PC-3 (cell line): ENCODE measurements at regions of chr2 and their contacts with region 1.

Region 1: GRCh38 chr2:196076778-196077568 is 8.3 kb upstream of the DNAH7 start:
- DNase-seq: no peak
- ATAC-seq: no peak
- H3K4me3 ChIP-seq: no peak overlapping the region
- H3K27ac ChIP-seq: no peak overlapping the region
- H3K4me1 ChIP-seq: peaks cover 22% of the 10 kb centered on the region
- H3K27me3 ChIP-seq: no peaks in the 10 kb centered on the region
- CTCF ChIP-seq: no peak

Region 2: DNA sequence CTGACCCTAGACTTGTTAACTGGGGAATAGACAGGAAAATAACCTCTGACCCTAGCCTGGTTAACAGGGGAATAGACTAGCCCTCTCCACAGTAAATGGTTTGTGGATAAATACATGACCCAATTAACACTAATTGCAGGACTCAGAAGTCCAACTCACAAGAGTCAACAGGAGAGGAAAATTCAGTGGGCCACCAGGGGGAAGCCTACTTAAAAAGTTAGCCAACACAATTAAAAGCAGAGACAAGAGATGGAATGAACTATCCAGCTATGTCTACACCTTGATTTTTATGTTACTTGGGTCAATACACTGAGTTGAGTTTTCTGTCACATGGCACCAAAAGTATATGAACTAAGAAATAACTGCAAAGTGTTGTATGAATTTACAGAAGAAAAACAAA is 578.8 kb before region 1 on chr2:
- CTCF ChIA-PET with region 1: no interaction called
- POLR2A ChIA-PET with region 1: no interaction called
- intact Hi-C with region 1: no loop called
- DNase-seq: peak; percentile 59
- ATAC-seq: peak; percentile 37; the same call in 1 of the 2 replicates
- H3K4me3 ChIP-seq: no peak overlapping the region
- H3K27ac ChIP-seq: no peak overlapping the region
- H3K4me1 ChIP-seq: 0 out of 2 replicates have a peak, but pooled peaks cover 7% of the 10 kb centered on the region
- H3K27me3 ChIP-seq: no peaks in the 10 kb centered on the region
- CTCF ChIP-seq: peak; percentile 72

Region 3: GRCh38 chr2:195912079-195912478 is 164.9 kb before region 1 on chr2:
- CTCF ChIA-PET with region 1: no interaction called
- POLR2A ChIA-PET with region 1: no interaction called
- intact Hi-C with region 1: no loop called
- DNase-seq: no peak
- ATAC-seq: no peak
- H3K4me3 ChIP-seq: no peak overlapping the region
- H3K27ac ChIP-seq: no peak overlapping the region
- H3K4me1 ChIP-seq: no peaks in the 10 kb centered on the region
- H3K27me3 ChIP-seq: no peaks in the 10 kb centered on the region
- CTCF ChIP-seq: no peak

Region 4: DNA sequence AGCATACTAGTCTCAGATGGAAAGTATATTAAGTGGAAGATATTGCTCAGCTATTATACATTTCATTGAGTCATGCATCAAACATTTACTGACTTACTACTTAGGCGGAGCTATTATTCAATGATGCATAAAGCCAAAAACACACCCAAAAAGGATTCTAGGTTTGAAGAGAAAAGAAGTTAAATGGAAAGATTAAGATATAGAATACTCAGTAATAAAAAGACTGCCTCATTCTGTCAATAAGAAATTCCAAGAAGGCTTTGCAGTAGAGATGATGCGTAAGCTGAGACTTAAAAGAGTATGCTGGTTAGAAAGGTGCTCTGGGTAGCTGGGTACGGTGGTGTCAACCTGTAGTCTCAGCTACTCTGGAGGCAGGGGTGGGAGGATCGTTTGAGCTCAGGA is 66.8 kb after region 1 on chr2:
- CTCF ChIA-PET with region 1: interaction called, 4 read pairs
- POLR2A ChIA-PET with region 1: no interaction called
- intact Hi-C with region 1: loop called (anchors 5 kb)
- DNase-seq: peak; percentile 87
- ATAC-seq: peak; percentile 97
- H3K4me3 ChIP-seq: no peak overlapping the region
- H3K27ac ChIP-seq: peak overlapping the region; percentile 52
- H3K4me1 ChIP-seq: peaks cover 17% of the 10 kb centered on the region
- H3K27me3 ChIP-seq: no peaks in the 10 kb centered on the region
- CTCF ChIP-seq: no peak

Region 5: GRCh38 chr2:196171248-196171871 is 94.4 kb after region 1 on chr2 and contains the start of gene STK17B:
- CTCF ChIA-PET with region 1: no interaction called
- POLR2A ChIA-PET with region 1: interaction called, 7 read pairs
- intact Hi-C with region 1: loop called (anchors 1 kb)
- DNase-seq: peak; percentile 96
- ATAC-seq: peak; percentile 73
- H3K4me3 ChIP-seq: peak within 1 kb of the TSS; percentile 96
- H3K27ac ChIP-seq: peak within 1 kb of the TSS; percentile 49
- H3K4me1 ChIP-seq: peaks cover 28% of the 10 kb centered on the region
- H3K27me3 ChIP-seq: no peaks in the 10 kb centered on the region
- CTCF ChIP-seq: no peak
- total RNA-seq, gene STK17B: 21.3 and 22.1 TPM in 2 replicates

Region 6: DNA sequence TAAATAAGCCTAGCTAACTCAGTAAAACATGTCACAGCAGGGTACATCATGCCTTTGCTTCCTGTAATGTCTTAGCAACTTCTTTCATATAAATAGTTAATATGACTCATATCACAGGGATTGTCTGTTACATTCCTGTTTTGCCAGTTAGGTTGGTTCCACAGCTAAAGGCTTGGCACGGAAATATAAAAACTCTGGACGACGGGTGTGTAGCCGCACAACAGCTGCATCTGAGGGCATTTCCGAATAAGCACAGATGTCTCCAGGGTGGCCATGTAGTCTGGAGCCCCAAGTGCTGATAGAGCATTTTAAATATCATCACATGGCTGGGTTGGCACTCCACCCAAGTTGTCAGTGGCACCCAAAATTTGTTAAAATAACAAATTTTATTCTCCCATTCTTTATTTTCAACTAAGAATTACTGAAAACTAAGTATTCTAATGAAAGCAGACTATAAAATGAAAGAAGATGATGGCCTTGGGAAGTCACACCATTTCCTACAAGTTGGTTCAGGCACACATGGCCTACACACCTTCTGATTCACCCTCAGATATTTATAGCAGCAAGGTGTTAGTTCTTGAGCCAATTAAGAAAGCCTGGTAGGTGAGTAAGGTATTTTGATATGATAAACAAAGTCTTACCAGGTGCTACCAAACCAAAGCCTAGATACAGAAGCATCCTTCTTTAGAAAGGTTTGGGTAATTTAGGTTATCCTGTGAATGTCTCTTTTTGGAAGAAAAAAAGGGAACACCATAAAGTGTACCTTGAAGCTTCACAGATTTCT is 156.2 kb after region 1 on chr2:
- CTCF ChIA-PET with region 1: no interaction called
- POLR2A ChIA-PET with region 1: no interaction called
- intact Hi-C with region 1: loop called (anchors 2 kb)
- DNase-seq: peak; percentile 97
- ATAC-seq: peak; percentile 96
- H3K4me3 ChIP-seq: peak overlapping the region; percentile 13; the same call in 1 of the 2 replicates
- H3K27ac ChIP-seq: peak overlapping the region; percentile 77
- H3K4me1 ChIP-seq: peaks cover 26% of the 10 kb centered on the region
- H3K27me3 ChIP-seq: no peaks in the 10 kb centered on the region
- CTCF ChIP-seq: no peak

Region 7: DNA sequence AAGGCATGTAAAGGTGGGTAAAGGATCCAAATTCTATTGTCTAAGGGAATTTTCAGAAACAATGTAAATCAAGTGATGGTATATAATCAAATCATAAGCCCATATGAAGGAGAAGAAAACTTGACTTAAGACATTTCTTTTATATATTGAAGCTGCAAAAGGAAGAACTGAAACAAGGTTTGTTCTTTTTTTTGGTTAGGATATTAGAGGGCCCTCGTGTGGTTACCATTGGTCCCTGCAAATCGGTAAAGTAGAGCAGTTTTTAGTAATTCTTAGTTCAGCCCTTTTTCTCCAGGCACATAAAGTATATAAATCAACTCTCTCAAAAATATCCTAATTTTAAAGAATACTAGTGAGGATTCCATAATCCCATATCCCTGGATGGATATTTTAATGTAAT is 200.0 kb after region 1 on chr2:
- CTCF ChIA-PET with region 1: interaction called, 7 read pairs
- POLR2A ChIA-PET with region 1: no interaction called
- intact Hi-C with region 1: loop called (anchors 1 kb)
- DNase-seq: peak; percentile 59
- ATAC-seq: no peak
- H3K4me3 ChIP-seq: no peak overlapping the region
- H3K27ac ChIP-seq: no peak overlapping the region; the same call in 1 of the 2 replicates
- H3K4me1 ChIP-seq: peaks cover 30% of the 10 kb centered on the region
- H3K27me3 ChIP-seq: no peaks in the 10 kb centered on the region
- CTCF ChIP-seq: peak; percentile 86

Region 8: DNA sequence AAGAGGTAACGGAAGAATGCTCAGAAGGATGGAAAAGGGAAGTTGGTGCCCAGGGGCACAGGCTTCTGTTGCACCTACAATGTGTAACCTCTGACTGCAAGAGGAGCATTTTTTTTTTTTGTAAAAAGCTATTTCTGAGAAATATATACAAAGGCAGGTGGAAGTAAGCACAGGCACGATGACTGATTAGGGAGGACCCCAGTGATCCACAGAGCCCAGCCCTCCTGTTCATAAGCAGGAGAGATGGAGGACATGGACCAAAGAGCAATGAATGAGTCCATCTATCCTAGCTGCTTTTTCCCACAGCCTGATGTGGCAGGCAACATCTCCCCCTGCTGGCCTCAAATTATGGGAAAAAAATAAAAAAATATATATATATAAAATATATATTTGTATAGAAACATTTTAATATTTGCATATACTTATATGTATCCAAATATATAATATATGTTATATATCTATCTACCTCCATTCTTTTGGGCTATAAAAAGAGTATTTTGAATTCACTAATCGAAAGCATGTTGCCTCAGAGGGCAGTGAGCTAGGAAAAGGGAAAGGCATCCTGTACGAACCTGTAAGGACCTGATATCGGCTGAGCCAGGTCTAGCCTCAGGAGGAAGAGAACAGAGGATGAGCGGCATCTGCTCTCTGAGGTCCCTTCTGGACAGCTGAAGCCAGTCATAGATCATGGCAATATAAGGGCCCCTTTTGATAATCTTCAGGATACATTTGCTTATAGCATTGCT is 260.4 kb after region 1 on chr2:
- CTCF ChIA-PET with region 1: interaction called, 9 read pairs
- POLR2A ChIA-PET with region 1: no interaction called
- intact Hi-C with region 1: loop called (anchors 1 kb)
- DNase-seq: peak; percentile 70
- ATAC-seq: no peak
- H3K4me3 ChIP-seq: no peak overlapping the region
- H3K27ac ChIP-seq: no peak overlapping the region
- H3K4me1 ChIP-seq: peaks cover 33% of the 10 kb centered on the region
- H3K27me3 ChIP-seq: no peaks in the 10 kb centered on the region
- CTCF ChIP-seq: peak; percentile 42